A673 (cell line): ENCODE measurements at regions of chr10 and their contacts with region 1.

Region 1: DNA sequence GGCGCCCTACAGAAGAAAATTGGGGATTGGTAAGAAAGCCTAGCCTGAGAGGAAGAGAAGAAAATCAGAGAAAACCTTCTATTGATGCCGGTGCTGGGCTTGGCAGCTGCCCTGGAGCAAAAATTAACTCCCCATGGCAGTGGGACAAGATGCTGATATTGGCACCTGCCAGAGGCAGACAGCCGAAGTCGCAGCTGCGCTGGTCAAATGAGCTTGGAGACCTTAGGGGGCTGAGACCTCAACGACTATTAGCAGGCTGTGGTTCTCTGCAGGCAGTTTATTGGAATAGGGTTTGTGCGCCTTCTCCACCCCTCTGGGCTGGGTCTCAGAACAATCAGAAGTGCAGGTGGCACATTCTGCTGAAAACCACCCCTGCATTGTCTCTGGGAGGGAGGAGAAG is 213.7 kb downstream of the GFRA1 start:
- DNase-seq: no peak
- H3K4me3 ChIP-seq: no peak overlapping the region
- H3K27ac ChIP-seq: no peak overlapping the region
- H3K4me1 ChIP-seq: no peaks in the 10 kb centered on the region
- H3K27me3 ChIP-seq: peaks cover 90% of the 10 kb centered on the region
- CTCF ChIP-seq: no peak

Region 2: DNA sequence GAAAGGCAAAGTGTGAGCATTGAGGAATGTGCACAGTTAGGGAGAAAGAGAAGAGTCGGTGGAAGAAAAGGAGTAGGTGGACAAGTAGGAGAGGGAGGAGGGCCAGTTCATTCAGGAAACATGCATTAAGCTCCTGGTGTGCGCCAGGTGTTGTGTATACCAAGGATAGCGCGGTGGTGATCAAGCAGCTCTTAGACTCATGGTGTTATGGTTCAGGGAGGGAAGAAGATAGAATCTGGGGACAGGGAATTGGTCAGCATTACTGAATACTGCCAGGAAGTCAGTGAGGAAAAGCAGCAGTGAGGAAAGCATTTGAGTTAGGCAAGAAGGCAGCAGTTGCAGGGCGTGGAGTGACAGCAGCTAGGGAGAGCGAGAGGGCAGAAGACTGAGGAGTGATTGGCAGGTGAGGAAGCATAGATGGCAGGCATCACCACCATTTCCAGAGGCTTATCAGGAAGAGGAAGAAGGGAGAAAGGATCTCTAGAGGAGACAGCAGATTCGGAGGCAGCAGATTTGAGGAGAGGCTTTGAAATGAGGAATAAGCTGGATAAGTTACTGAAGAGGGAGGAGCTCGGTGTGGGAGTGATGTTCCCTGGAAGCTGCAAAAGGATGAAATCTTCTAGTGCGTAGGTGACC is 51.9 kb before region 1 on chr10:
- CTCF ChIA-PET with region 1: no interaction called
- POLR2A ChIA-PET with region 1: no interaction called
- intact Hi-C with region 1: no loop called
- DNase-seq: no peak
- H3K4me3 ChIP-seq: no peak overlapping the region
- H3K27ac ChIP-seq: no peak overlapping the region
- H3K4me1 ChIP-seq: no peaks in the 10 kb centered on the region
- H3K27me3 ChIP-seq: peaks cover 28% of the 10 kb centered on the region
- CTCF ChIP-seq: no peak

Region 3: GRCh38 chr10:117405730-117406129 is 1346.4 kb after region 1 on chr10:
- CTCF ChIA-PET with region 1: no interaction called
- POLR2A ChIA-PET with region 1: interaction called, 11 read pairs
- intact Hi-C with region 1: no loop called
- DNase-seq: no peak
- H3K4me3 ChIP-seq: no peak overlapping the region
- H3K27ac ChIP-seq: no peak overlapping the region
- H3K4me1 ChIP-seq: no peaks in the 10 kb centered on the region
- H3K27me3 ChIP-seq: peaks cover 10% of the 10 kb centered on the region
- CTCF ChIP-seq: no peak